CD4-positive, alpha-beta memory T cell (primary cell): ENCODE measurements at regions of chr18 and their contacts with region 1.

Region 1: DNA sequence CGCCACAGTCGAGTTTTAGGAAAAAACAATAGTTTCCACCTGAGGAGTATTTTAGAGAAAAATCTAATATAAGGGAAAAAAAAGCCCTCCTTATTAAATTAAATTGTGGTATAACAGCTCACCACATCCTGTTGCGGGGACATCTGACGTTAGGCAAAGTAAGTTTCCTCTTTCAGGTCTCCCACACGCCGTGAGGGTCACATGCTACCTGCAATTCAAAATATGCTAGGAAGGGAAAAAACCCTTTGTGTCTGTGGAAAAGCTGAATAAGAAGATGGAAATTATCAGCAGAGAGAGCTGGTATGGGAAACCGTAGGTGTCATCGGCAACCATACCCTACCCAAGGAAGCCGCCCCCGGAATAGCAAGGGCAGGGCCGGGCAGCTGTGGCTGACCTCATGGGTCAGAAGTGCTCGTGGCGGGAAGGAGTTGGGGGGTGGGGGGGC is 128.0 kb downstream of the NFATC1 start:
- DNase-seq: peak; percentile 82 to 93 (median 84)
- H3K4me3 ChIP-seq: peak overlapping the region in 1 of 2 donors; percentile 68
- H3K4me3 Mint-ChIP-seq: peak overlapping the region; percentile 86 to 95 (median 92)
- H3K27ac ChIP-seq: peak overlapping the region; percentile 85
- H3K27ac Mint-ChIP-seq: peak overlapping the region; percentile 97 to 99 (median 99)
- H3K4me1 ChIP-seq: peaks cover 64% of the 10 kb centered on the region
- H3K4me1 Mint-ChIP-seq: peaks cover 40 to 84% (median 57%) of the 10 kb centered on the region in 4 donors
- H3K27me3 ChIP-seq: no peaks in the 10 kb centered on the region
- H3K27me3 Mint-ChIP-seq: no peaks in the 10 kb centered on the region

Region 2: GRCh38 chr18:79068937-79069791 is 454.6 kb before region 1 on chr18 and contains the start of gene ATP9B:
- CTCF ChIA-PET with region 1: no interaction called
- POLR2A ChIA-PET with region 1: interaction called, 3 read pairs
- intact Hi-C with region 1: loop called (anchors 5 kb)
- DNase-seq: peak; percentile 97 to 100 (median 99)
- H3K4me3 ChIP-seq: peak within 1 kb of the TSS; percentile 65 to 69
- H3K4me3 Mint-ChIP-seq: peak within 1 kb of the TSS; percentile 90 to 100 (median 95)
- H3K27ac ChIP-seq: peak within 1 kb of the TSS; percentile 98
- H3K27ac Mint-ChIP-seq: peak within 1 kb of the TSS; percentile 99 to 100 (median 99)
- H3K4me1 ChIP-seq: peaks cover 36% of the 10 kb centered on the region
- H3K4me1 Mint-ChIP-seq: peaks cover 28 to 66% (median 43%) of the 10 kb centered on the region in 4 donors
- H3K27me3 ChIP-seq: no peaks in the 10 kb centered on the region
- H3K27me3 Mint-ChIP-seq: peaks cover 0 to 5% of the 10 kb centered on the region in 2 donors
- total RNA-seq, gene ATP9B: 73.2 to 76.4 TPM

Region 3: GRCh38 chr18:79405781-79406575 is 117.8 kb before region 1 on chr18:
- CTCF ChIA-PET with region 1: interaction called, 20 read pairs
- POLR2A ChIA-PET with region 1: interaction called, 173 read pairs
- intact Hi-C with region 1: no loop called
- DNase-seq: peak; percentile 91 to 98 (median 95)
- H3K4me3 ChIP-seq: peak overlapping the region; percentile 49 to 60
- H3K4me3 Mint-ChIP-seq: peak overlapping the region; percentile 83 to 95 (median 92)
- H3K27ac ChIP-seq: peak overlapping the region; percentile 87
- H3K27ac Mint-ChIP-seq: peak overlapping the region in 6 of 7 donors; percentile 95 to 100 (median 98)
- H3K4me1 ChIP-seq: peaks cover 62% of the 10 kb centered on the region
- H3K4me1 Mint-ChIP-seq: peaks cover 40 to 66% (median 55%) of the 10 kb centered on the region in 4 donors
- H3K27me3 ChIP-seq: no peaks in the 10 kb centered on the region
- H3K27me3 Mint-ChIP-seq: no peaks in the 10 kb centered on the region

Region 4: DNA sequence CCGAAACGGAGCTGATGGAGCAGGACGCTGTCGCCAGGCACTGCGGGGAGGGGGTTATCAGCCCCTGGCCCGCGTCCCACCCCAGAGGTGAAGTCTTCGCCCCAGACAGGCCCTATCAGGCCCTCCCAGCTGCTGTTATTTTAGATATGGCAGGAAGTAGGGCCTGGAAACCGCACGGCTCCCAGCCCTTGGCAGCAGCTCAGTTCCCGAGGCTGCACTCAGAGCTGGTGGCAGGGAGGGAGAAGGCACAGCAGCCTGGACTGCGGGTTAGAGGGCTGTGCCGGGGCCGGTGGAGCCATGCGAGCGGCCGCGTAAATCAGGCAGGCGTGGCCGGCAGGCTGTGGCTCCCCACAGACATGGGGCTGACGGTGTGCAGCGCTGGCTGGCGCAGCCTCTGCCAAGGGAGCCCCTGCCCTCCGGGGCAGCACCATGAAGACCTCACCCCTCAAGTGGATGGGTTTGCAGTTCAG is 16.6 kb before region 1 on chr18:
- CTCF ChIA-PET with region 1: interaction called, 7 read pairs
- POLR2A ChIA-PET with region 1: interaction called, 17 read pairs
- intact Hi-C with region 1: no loop called
- DNase-seq: peak in 3 of 5 donors; percentile 23 to 48 (median 27)
- H3K4me3 ChIP-seq: no peak overlapping the region
- H3K4me3 Mint-ChIP-seq: peak overlapping the region in 7 of 8 donors; percentile 38 to 78 (median 68)
- H3K27ac ChIP-seq: peak overlapping the region; percentile 36
- H3K27ac Mint-ChIP-seq: peak overlapping the region; percentile 87 to 92 (median 91)
- H3K4me1 ChIP-seq: peaks cover 54% of the 10 kb centered on the region
- H3K4me1 Mint-ChIP-seq: peaks cover 35 to 68% (median 51%) of the 10 kb centered on the region in 4 donors
- H3K27me3 ChIP-seq: no peaks in the 10 kb centered on the region
- H3K27me3 Mint-ChIP-seq: no peaks in the 10 kb centered on the region

Region 5: DNA sequence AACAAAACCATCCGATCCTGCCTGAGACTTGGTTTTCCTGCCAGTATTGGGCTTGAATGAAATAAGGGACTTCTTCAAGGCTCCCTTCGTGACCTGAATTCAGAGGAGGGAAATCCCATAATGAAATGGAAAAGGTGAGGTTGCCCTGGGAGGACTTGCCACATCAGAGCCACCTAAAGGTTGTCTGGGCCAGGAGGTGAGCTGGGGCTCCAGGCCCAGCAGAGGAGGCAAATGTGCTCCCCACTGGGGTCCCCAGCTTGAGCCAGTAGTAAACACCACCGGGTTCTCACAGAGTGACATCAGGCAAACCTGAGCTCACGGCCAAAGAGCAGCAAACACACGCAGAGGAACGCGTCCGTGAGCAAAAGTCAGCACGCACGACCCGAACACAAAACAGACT is 127.2 kb after region 1 on chr18:
- CTCF ChIA-PET with region 1: no interaction called
- POLR2A ChIA-PET with region 1: no interaction called
- intact Hi-C with region 1: no loop called
- DNase-seq: no peak
- H3K4me3 ChIP-seq: no peak overlapping the region
- H3K4me3 Mint-ChIP-seq: no peak overlapping the region
- H3K27ac ChIP-seq: no peak overlapping the region
- H3K27ac Mint-ChIP-seq: no peak overlapping the region
- H3K4me1 ChIP-seq: no peaks in the 10 kb centered on the region
- H3K4me1 Mint-ChIP-seq: no peaks in the 10 kb centered on the region
- H3K27me3 ChIP-seq: no peaks in the 10 kb centered on the region
- H3K27me3 Mint-ChIP-seq: peaks cover 0 to 6% of the 10 kb centered on the region in 2 donors

Region 6: DNA sequence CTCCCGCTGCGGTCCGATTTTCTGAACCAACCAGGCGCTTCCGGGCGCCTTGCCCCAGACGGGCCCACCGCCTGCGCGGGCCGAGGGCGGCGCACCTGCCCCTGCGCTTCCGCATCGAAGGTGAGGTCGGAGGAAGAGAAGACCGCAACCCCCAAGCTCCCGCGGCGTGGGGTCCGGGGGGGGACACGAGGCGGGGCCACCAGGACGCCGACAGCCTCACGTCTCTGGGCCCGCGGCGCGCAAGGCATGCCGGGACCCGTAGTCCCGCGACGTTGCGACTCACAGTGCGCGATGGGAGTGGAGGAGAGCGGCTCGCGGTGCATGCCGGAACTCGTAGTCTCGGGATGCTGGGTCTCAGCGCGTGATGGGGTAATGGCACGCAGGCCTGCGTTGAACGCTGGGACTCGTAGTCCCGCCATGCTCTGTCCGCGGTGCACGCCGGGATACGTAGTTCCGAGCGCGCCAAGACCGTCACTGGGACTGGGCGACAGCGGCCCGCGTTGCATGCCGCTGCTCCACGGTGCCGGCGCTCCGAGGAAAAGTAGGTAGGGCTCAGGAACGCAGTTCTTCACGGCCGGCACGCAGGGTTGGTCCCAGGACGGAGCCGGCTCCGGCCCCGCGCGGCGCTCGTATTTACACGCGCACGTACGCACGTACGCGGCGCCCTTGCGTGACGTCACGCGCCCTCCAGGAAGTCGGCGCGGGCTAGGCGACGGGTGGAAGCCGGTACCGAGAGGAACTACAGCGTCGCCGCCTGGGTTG is 155.5 kb after region 1 on chr18 and contains the start of gene CTDP1:
- CTCF ChIA-PET with region 1: no interaction called
- POLR2A ChIA-PET with region 1: interaction called, 9 read pairs
- intact Hi-C with region 1: loop called (anchors 1 kb)
- DNase-seq: peak; percentile 98 to 99 (median 99)
- H3K4me3 ChIP-seq: peak within 1 kb of the TSS; percentile 75 to 88
- H3K4me3 Mint-ChIP-seq: peak within 1 kb of the TSS; percentile 95 to 100 (median 98)
- H3K27ac ChIP-seq: peak within 1 kb of the TSS; percentile 98
- H3K27ac Mint-ChIP-seq: peak within 1 kb of the TSS; percentile 99 to 100 (median 99)
- H3K4me1 ChIP-seq: peaks cover 53% of the 10 kb centered on the region
- H3K4me1 Mint-ChIP-seq: peaks cover 40 to 64% (median 54%) of the 10 kb centered on the region in 4 donors
- H3K27me3 ChIP-seq: no peaks in the 10 kb centered on the region
- H3K27me3 Mint-ChIP-seq: no peaks in the 10 kb centered on the region
- total RNA-seq, gene CTDP1: 42.6 to 44.5 TPM

Region 7: GRCh38 chr18:79866889-79867574 is 343.3 kb after region 1 on chr18:
- CTCF ChIA-PET with region 1: no interaction called
- POLR2A ChIA-PET with region 1: no interaction called
- intact Hi-C with region 1: no loop called
- DNase-seq: no peak
- H3K4me3 ChIP-seq: no peak overlapping the region
- H3K4me3 Mint-ChIP-seq: no peak overlapping the region
- H3K27ac ChIP-seq: no peak overlapping the region
- H3K27ac Mint-ChIP-seq: no peak overlapping the region
- H3K4me1 ChIP-seq: no peaks in the 10 kb centered on the region
- H3K4me1 Mint-ChIP-seq: no peaks in the 10 kb centered on the region
- H3K27me3 ChIP-seq: no peaks in the 10 kb centered on the region
- H3K27me3 Mint-ChIP-seq: peaks cover 0 to 1% of the 10 kb centered on the region in 2 donors